ENCODE measurements at regions of chr17 and their contacts with region 1.

Region 1: DNA sequence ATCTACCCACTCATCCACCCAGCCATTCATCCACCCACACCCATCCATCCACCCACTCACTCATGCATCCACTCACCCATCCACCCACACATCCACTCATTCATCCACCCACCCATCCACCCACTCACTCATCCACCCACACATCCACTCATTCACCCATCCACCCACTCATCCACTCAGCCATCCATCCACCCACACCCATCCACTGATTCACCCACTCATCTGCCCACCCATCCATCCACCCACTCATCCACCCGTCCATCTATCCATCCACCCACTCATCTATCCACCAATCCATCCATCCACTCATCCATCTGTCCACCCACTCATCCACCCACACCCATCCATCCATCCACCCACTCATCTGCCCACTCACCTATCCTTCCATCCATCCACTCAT is 17.3 kb downstream of the NATD1 start:
- DNase-seq: no peak
- H3K4me3 ChIP-seq: no peak overlapping the region
- H3K27ac ChIP-seq: no peak overlapping the region
- H3K4me1 ChIP-seq: no peaks in the 10 kb centered on the region
- H3K27me3 ChIP-seq: no peaks in the 10 kb centered on the region
- CTCF ChIP-seq: no peak
- POLR2A ChIP-seq: no peak

Region 2: GRCh38 chr17:21263351-21263750 is 27.4 kb after region 1 on chr17:
- intact Hi-C with region 1: loop called (anchors 1 kb)
- DNase-seq: no peak
- H3K4me3 ChIP-seq: no peak overlapping the region
- H3K27ac ChIP-seq: no peak overlapping the region
- H3K4me1 ChIP-seq: no peaks in the 10 kb centered on the region
- H3K27me3 ChIP-seq: no peaks in the 10 kb centered on the region
- CTCF ChIP-seq: no peak
- POLR2A ChIP-seq: no peak

Measured in breast epithelium (tissue), 4 donors.